B cell (primary cell): ENCODE measurements at regions of chr12 and their contacts with region 1.

Region 1: GRCh38 chr12:21501379-21501956 is at the starts of genes GOLT1B and RECQL:
- DNase-seq: peak; percentile 96
- ATAC-seq: peak; percentile 95
- H3K4me3 ChIP-seq: peak within 1 kb of the TSS; percentile 69 to 97 (median 92)
- H3K4me3 Mint-ChIP-seq: no peak within 1 kb of the TSS
- H3K27ac ChIP-seq: peak within 1 kb of the TSS; percentile 70 to 89
- H3K27ac Mint-ChIP-seq: no peak within 1 kb of the TSS
- H3K4me1 ChIP-seq: peaks cover 26 to 28% of the 10 kb centered on the region in 2 donors
- H3K4me1 Mint-ChIP-seq: peaks cover 37% of the 10 kb centered on the region
- H3K27me3 ChIP-seq: no peaks in the 10 kb centered on the region
- H3K27me3 Mint-ChIP-seq: no peaks in the 10 kb centered on the region
- CTCF ChIP-seq: no peak
- total RNA-seq, gene GOLT1B: 25.1 and 26.3 TPM in 2 replicates
- total RNA-seq, gene RECQL: 54.8 and 56.3 TPM in 2 replicates

Region 2: GRCh38 chr12:21527451-21528180 is 26.1 kb after region 1 on chr12:
- CTCF ChIA-PET with region 1: no interaction called
- POLR2A ChIA-PET with region 1: interaction called, 6 read pairs
- intact Hi-C with region 1: loop called (anchors 2 kb)
- DNase-seq: peak; percentile 78
- ATAC-seq: peak; percentile 98
- H3K4me3 ChIP-seq: peak overlapping the region; percentile 38 to 70 (median 61)
- H3K4me3 Mint-ChIP-seq: peak overlapping the region; percentile 82
- H3K27ac ChIP-seq: no peak overlapping the region
- H3K27ac Mint-ChIP-seq: peak overlapping the region; percentile 54
- H3K4me1 ChIP-seq: peaks cover 6 to 9% of the 10 kb centered on the region in 2 donors
- H3K4me1 Mint-ChIP-seq: peaks cover 12% of the 10 kb centered on the region
- H3K27me3 ChIP-seq: peaks cover 0 to 14% (median 9%) of the 10 kb centered on the region in 4 experiments
- H3K27me3 Mint-ChIP-seq: peaks cover 23% of the 10 kb centered on the region
- CTCF ChIP-seq: no peak